Mammary epithelial cell (primary cell): ENCODE measurements at regions of chr17 and their contacts with region 1.

Region 1: GRCh38 chr17:65231662-65232335 is 94.6 kb downstream of the RGS9 start:
- DNase-seq: peak; percentile 72
- H3K4me3 ChIP-seq: no peak overlapping the region
- H3K27ac ChIP-seq: no peak overlapping the region
- H3K4me1 ChIP-seq: no peaks in the 10 kb centered on the region
- H3K27me3 ChIP-seq: no peaks in the 10 kb centered on the region
- CTCF ChIP-seq: peak; percentile 76 to 86

Region 2: DNA sequence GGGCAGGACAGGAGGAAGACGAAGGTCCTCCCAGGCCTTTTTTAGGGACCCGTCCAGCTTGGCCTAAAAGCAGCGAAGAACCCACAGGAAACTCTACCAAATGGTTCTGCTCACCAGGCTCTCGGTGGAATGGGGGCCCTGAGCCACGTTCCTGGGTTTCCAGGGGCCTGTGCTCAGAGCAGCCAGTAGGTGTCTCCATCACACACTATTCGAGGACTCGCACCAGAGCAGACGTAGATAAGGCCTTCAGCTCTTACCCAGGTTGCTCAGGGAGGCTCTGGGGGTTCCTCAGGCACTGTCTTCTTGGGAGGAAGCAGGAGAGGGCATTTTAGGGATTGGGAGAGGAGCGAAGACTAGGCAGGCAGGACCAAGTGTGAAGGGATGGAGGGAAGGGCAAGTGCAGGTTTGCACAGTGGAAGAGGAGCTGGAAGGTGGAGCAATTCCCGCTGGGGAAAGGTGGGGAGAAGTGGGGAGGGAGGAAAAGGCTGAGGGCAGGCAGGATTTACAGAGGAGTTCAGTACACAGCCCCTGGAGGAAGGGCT is 62.5 kb after region 1 on chr17:
- CTCF ChIA-PET with region 1: no interaction called
- dilution Hi-C with region 1: no loop called
- in situ Hi-C with region 1: no loop called
- intact Hi-C with region 1: loop called (anchors 2 kb)
- DNase-seq: peak; percentile 28
- H3K4me3 ChIP-seq: no peak overlapping the region
- H3K27ac ChIP-seq: no peak overlapping the region
- H3K4me1 ChIP-seq: no peaks in the 10 kb centered on the region
- H3K27me3 ChIP-seq: no peaks in the 10 kb centered on the region
- CTCF ChIP-seq: peak; percentile 65 to 91

Region 3: GRCh38 chr17:65556014-65556909 is 324.5 kb after region 1 on chr17:
- CTCF ChIA-PET with region 1: interaction called, 4 read pairs
- dilution Hi-C with region 1: no loop called
- in situ Hi-C with region 1: no loop called
- intact Hi-C with region 1: loop called (anchors 1 kb)
- DNase-seq: peak; percentile 24
- H3K4me3 ChIP-seq: no peak overlapping the region
- H3K27ac ChIP-seq: no peak overlapping the region
- H3K4me1 ChIP-seq: peaks cover 10% of the 10 kb centered on the region
- H3K27me3 ChIP-seq: peaks cover 21% of the 10 kb centered on the region
- CTCF ChIP-seq: peak; percentile 67

Region 4: DNA sequence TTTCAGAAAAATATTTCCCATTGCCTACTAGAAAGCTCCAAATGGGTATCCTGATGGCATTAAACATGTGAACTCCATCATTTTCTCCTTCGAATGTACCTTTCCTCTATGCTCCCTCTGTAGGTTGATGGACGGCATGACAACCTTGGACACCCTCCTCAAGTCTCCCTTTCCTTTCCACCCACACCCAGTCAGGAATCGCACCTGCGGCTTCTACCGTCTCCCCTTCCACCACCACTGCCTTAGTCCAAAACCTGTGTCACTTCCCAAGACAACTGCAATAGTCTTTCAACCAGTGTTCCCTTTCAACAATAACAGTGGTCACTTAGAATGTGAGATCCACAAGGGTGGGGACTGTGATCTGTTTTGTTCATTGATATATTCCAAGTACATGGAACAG is 562.8 kb after region 1 on chr17:
- CTCF ChIA-PET with region 1: no interaction called
- dilution Hi-C with region 1: no loop called
- in situ Hi-C with region 1: no loop called
- intact Hi-C with region 1: loop called (anchors 1 kb)
- DNase-seq: peak; percentile 29
- H3K4me3 ChIP-seq: no peak overlapping the region
- H3K27ac ChIP-seq: no peak overlapping the region
- H3K4me1 ChIP-seq: no peaks in the 10 kb centered on the region
- H3K27me3 ChIP-seq: no peaks in the 10 kb centered on the region
- CTCF ChIP-seq: peak; percentile 46 to 75

Region 5: GRCh38 chr17:66165513-66166123 is 933.8 kb after region 1 on chr17:
- CTCF ChIA-PET with region 1: no interaction called
- dilution Hi-C with region 1: no loop called
- in situ Hi-C with region 1: loop called (anchors 10 to 25 kb)
- intact Hi-C with region 1: loop called (anchors 1 kb)
- DNase-seq: peak; percentile 33
- H3K4me3 ChIP-seq: no peak overlapping the region
- H3K27ac ChIP-seq: no peak overlapping the region
- H3K4me1 ChIP-seq: no peaks in the 10 kb centered on the region
- H3K27me3 ChIP-seq: no peaks in the 10 kb centered on the region
- CTCF ChIP-seq: peak; percentile 62 to 64

Region 6: DNA sequence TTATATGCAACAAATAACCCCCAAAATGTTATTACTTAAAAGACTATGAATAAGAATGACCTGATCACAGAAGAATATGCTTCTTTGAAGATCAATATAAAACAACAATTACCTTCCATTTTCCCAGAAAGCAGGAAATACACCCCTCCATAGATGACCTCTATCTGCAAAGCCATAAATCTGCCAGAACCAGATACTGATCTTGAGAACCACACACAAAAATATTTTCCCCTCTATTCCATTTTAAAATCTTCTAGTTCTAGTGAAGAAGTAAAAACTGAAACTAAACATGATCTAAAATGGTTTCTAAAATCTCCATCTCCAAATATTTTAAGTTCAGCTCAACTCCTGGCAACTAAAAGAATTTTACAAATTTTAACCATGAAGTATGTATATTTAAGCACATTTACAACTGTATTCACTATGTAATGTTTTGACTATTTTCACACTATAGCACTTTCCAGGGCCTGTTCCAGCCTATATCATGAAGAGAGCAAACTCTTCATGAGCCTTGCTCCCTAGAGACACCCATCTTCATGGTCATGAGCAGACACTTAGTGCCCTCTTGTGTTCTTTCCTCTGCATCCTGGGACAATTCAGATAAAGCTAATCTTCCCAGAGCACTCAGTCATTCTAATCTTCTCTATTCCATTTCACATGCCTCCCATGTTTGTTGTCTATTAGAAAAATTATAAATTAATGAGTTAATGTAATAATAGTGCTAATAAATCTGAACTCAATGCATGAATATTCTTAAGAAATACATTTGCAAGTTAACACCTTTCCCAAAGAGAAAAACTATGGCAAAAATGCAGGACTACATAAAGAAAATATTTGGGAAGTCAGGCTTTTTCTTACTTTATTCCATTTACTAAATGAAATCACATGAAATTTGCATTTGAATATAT is 1926.2 kb after region 1 on chr17:
- CTCF ChIA-PET with region 1: no interaction called
- dilution Hi-C with region 1: no loop called
- in situ Hi-C with region 1: no loop called
- intact Hi-C with region 1: loop called (anchors 10 kb)
- DNase-seq: no peak
- H3K4me3 ChIP-seq: no peak overlapping the region
- H3K27ac ChIP-seq: no peak overlapping the region
- H3K4me1 ChIP-seq: no peaks in the 10 kb centered on the region
- H3K27me3 ChIP-seq: no peaks in the 10 kb centered on the region
- CTCF ChIP-seq: peak; percentile 24 to 46